ENCODE measurements at regions of chr2 and their contacts with region 1.

Region 1: GRCh38 chr2:37537316-37537715 is 134.1 kb downstream of the CDC42EP3 start:
- DNase-seq: no peak
- ATAC-seq: no peak
- H3K4me3 Mint-ChIP-seq: no peak overlapping the region
- H3K27ac Mint-ChIP-seq: no peak overlapping the region
- H3K4me1 Mint-ChIP-seq: peaks cover 7% of the 10 kb centered on the region
- H3K27me3 Mint-ChIP-seq: peaks cover 6% of the 10 kb centered on the region

Region 2: GRCh38 chr2:37648331-37649011 is 111.2 kb after region 1 on chr2:
- CTCF ChIA-PET with region 1: interaction called, 17 read pairs
- POLR2A ChIA-PET with region 1: no interaction called
- DNase-seq: peak; percentile 46
- ATAC-seq: peak; percentile 69
- H3K4me3 Mint-ChIP-seq: peak overlapping the region; percentile 48
- H3K27ac Mint-ChIP-seq: peak overlapping the region; percentile 86
- H3K4me1 Mint-ChIP-seq: peaks cover 80% of the 10 kb centered on the region
- H3K27me3 Mint-ChIP-seq: no peaks in the 10 kb centered on the region

Measured in activated CD8-positive, alpha-beta T cell treated with anti-CD3 and anti-CD28 coated beads, Interleukin-2, amount 10 ng/mL, durations not matched to agents 7 days and 5 days (primary cell).